PC-9 (cell line): ENCODE measurements at regions of chr12 and their contacts with region 1.

Region 1: DNA sequence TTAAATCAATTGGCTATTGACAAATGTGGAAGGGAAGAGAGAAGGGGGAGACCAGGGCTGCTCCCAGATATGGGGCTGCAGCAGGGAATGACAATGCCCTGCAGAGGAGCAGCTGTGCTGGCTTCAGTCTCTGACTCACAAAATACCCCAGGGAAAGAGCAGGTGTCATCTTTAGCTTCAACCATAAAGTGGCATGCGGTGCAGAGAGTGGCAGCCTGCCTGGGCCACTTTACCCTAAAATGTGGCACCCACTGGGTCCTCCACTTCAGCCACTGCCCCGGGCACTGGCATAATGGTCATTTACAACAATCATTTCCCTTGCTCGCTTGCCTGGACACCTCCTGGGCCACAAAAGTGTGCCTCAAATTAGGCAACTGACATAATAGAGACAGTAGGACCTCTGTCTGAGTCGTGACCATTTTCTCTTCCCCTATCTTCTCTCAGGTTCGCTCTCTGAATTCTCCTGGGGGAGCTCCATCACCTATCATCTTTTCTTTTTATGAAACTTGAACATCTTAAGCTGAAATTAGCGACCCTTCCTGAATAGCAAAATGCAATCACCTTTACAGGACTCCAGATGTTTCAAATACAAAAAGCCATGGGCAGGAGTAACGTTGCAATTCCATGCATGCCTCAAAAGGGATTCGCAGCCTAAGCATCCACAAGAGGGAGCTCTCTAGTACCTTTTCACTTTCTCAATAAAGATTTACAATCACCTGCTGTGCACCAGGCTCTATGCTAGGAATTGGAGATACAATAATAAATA is 179.9 kb upstream of the ATF7IP start:
- DNase-seq: peak; percentile 39 to 48
- H3K4me3 ChIP-seq: no peak overlapping the region
- H3K27ac ChIP-seq: no peak overlapping the region
- H3K4me1 ChIP-seq: 0 out of 2 replicates have a peak, but pooled peaks cover 7% of the 10 kb centered on the region
- H3K27me3 ChIP-seq: no peaks in the 10 kb centered on the region
- CTCF ChIP-seq: peak; percentile 83

Region 2: DNA sequence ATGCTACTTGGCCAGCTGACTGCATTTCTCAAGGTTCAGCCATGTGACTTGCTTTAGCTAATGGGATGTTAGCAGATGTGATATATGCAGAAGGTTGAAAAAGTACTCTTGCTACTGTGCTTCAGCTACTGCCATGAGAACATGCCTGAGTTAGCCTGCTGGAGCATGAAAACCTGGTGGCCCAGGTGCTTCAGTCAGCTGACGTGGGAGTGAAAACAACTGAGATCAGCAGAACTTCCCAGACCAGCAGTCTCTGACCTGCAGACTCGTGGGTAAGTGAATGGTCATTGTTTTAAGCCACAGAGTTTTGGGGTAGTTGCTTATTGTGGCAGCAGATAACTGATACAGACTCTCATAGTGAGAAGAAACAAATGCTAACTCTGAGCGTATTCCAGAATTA is 85.6 kb before region 1 on chr12:
- CTCF ChIA-PET with region 1: no interaction called
- POLR2A ChIA-PET with region 1: no interaction called
- intact Hi-C with region 1: no loop called
- DNase-seq: no peak
- H3K4me3 ChIP-seq: no peak overlapping the region
- H3K27ac ChIP-seq: no peak overlapping the region
- H3K4me1 ChIP-seq: peaks cover 13% of the 10 kb centered on the region; the same call in 1 of the 2 replicates
- H3K27me3 ChIP-seq: no peaks in the 10 kb centered on the region
- CTCF ChIP-seq: no peak

Region 3: GRCh38 chr12:14138495-14138894 is 47.1 kb before region 1 on chr12:
- CTCF ChIA-PET with region 1: no interaction called
- POLR2A ChIA-PET with region 1: no interaction called
- intact Hi-C with region 1: no loop called
- DNase-seq: no peak
- H3K4me3 ChIP-seq: no peak overlapping the region
- H3K27ac ChIP-seq: no peak overlapping the region
- H3K4me1 ChIP-seq: no peaks in the 10 kb centered on the region
- H3K27me3 ChIP-seq: no peaks in the 10 kb centered on the region; the same call in 1 of the 2 replicates
- CTCF ChIP-seq: peak; percentile 33; the same call in 1 of the 2 replicates

Region 4: DNA sequence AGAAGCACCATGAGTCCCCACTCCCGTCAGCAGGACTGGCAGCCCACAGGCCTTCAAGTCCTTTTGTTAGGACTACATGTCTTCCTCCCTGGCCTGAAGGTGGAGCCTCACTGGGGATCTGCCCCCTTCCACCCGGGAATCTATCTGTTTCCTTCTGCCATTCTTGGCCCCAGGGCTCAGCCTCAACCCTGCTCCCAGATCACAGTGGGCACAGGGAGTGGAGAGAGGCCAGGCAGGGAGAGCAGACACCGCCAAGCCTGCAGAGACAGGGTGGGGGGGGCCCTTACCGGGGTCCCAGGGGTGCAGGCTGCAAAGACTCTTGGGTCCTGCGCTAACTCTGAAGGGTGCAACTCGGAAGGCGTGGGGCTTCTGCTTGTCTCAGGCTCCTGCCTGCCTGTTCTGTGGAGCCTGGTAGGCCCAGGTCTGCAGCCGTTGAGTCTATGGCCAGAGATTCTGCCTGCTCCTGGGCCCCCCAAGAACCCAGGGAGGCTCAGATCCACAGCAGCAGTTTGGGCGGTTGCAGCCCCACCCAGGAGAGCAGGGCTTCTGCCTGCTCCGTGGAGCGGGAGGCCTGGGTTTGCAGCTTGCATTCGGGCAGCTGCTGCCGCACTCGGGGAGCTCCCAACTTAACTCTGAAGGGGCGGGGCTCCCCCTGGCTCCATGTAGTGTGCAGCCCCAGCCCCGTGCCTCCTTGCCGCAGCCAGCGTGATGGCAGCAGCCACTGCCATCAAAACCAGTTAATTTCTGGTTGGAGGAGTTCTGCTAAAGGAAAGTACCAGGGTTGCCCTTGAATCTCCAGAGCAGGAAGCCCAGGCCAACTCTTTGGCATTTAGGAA is 403.8 kb after region 1 on chr12:
- CTCF ChIA-PET with region 1: no interaction called
- POLR2A ChIA-PET with region 1: no interaction called
- intact Hi-C with region 1: no loop called
- DNase-seq: no peak
- H3K4me3 ChIP-seq: no peak overlapping the region
- H3K27ac ChIP-seq: no peak overlapping the region
- H3K4me1 ChIP-seq: no peaks in the 10 kb centered on the region
- H3K27me3 ChIP-seq: no peaks in the 10 kb centered on the region
- CTCF ChIP-seq: no peak

Region 5: GRCh38 chr12:14664510-14664909 is 478.9 kb after region 1 on chr12:
- CTCF ChIA-PET with region 1: no interaction called
- POLR2A ChIA-PET with region 1: no interaction called
- intact Hi-C with region 1: loop called (anchors 1 kb)
- DNase-seq: peak; percentile 37 to 45
- H3K4me3 ChIP-seq: no peak overlapping the region
- H3K27ac ChIP-seq: no peak overlapping the region
- H3K4me1 ChIP-seq: no peaks in the 10 kb centered on the region
- H3K27me3 ChIP-seq: no peaks in the 10 kb centered on the region
- CTCF ChIP-seq: peak; percentile 79